Transverse colon (tissue), 4 donors: ENCODE measurements at regions of chr11 and their contacts with region 1.

Region 1: DNA sequence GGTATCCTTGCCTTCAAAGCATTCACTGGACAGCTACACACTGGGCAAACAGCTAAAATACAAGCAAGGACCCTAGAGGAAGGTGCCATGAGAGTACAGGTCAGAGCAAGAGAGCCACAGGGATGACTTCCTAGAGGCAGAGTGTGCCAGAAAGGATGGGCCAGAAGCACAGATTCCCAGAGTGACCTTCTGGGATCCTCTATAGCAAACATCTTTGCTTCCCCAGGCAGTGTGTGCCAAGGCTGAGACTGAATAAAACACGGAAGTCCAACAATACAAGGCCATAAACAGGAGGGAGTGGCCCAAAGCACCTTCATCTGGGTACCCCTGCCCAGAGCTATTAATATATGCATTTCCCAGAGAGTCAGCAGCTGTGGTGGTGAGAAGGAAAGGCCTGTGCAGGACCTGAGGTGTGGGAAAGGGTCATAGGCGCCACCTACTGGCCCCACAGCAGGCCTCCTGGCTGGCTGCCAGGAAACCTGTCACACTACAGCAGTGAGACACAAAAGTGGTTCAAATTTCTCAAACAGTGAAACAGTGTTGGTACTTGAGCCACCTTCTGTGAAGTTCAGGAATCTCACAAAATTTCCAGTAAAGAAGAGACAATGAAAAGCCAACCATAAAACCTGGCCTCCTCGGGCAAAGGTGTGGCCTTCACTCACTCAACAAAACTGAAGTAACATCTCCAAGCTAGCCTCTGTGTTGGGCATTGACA is 20.3 kb downstream of the CLPB start:
- DNase-seq: peak; percentile 86
- H3K4me3 ChIP-seq: no peak overlapping the region
- H3K27ac ChIP-seq: no peak overlapping the region
- H3K4me1 ChIP-seq: peaks cover 8 to 10% (median 9%) of the 10 kb centered on the region in 4 donors
- H3K27me3 ChIP-seq: no peaks in the 10 kb centered on the region
- CTCF ChIP-seq: peak; percentile 81 to 85 (median 83)
- EP300 ChIP-seq: no peak
- POLR2A ChIP-seq: no peak

Region 2: DNA sequence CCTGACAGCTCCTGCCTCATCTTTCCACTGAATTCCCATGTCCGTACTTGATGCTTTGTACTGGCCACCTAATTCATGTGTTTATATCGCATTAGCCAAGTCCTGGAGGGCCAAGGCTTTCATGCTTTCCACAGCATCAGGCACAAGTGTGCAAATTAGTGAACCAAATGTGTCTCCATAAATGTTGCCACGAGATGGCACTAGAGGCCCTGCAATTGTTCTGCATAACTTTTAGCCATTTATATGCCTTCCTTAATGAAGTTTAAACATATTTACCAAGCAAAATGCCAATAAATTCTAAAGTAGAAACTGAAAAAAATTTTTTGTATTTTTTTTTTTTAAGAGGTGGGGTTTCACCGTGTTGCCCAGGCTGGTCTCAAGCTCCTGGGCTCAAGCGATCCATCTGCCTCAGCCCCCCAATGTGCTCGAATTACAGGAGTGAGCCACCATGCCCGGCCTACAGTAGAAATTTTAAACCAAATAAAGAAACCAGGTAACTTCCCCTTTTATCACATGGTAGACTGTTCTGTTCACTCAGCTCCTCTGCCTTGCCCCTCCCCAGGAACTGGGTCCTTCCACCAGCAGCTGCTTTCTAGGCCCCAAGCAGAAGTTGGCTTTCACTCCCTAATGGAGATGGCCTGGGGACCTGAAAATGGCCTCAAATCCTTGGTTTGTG is 436.2 kb before region 1 on chr11:
- in situ Hi-C with region 1: loop called in 3 of 4 experiments (anchors 25 kb)
- intact Hi-C with region 1: no loop called
- DNase-seq: peak; percentile 56
- H3K4me3 ChIP-seq: no peak overlapping the region
- H3K27ac ChIP-seq: no peak overlapping the region
- H3K4me1 ChIP-seq: no peaks in the 10 kb centered on the region
- H3K27me3 ChIP-seq: no peaks in the 10 kb centered on the region
- CTCF ChIP-seq: peak; percentile 66 to 82 (median 78)
- EP300 ChIP-seq: no peak
- POLR2A ChIP-seq: no peak

Region 3: GRCh38 chr11:72585762-72586311 is 171.8 kb after region 1 on chr11:
- in situ Hi-C with region 1: no loop called
- intact Hi-C with region 1: no loop called
- DNase-seq: peak; percentile 72
- H3K4me3 ChIP-seq: no peak overlapping the region
- H3K27ac ChIP-seq: no peak overlapping the region
- H3K4me1 ChIP-seq: peaks cover 0 to 22% (median 13%) of the 10 kb centered on the region in 4 donors
- H3K27me3 ChIP-seq: peaks cover 53% of the 10 kb centered on the region
- CTCF ChIP-seq: peak; percentile 89 to 98 (median 95)
- EP300 ChIP-seq: no peak
- POLR2A ChIP-seq: no peak